ENCODE measurements at regions of chr12 and their contacts with region 1.

Region 1: DNA sequence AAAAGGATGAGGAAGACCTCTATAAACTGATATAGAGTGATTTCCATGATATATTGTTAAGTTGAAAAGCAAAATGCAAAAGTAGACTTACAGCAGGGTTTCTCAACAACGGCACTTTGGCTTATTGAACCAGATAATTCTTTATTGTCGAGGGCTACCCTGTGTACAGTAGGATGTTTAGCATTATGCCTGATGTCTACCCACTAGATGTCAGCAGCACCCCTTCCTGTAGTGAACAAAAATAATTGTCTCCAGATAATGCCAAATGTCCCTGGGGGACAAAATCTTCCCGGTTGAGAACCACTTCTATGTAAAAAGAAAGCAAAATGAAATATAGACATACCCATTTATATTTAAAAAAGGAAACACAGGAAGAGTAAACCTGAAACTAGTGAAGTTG is 32.4 kb downstream of the ABCD2 start:
- DNase-seq: no peak
- ATAC-seq: peak in 2 of 4 donors; percentile 54 to 60
- H3K4me3 ChIP-seq: no peak overlapping the region
- H3K27ac ChIP-seq: no peak overlapping the region
- H3K4me1 ChIP-seq: no peaks in the 10 kb centered on the region
- H3K27me3 ChIP-seq: no peaks in the 10 kb centered on the region
- CTCF ChIP-seq: no peak

Region 2: DNA sequence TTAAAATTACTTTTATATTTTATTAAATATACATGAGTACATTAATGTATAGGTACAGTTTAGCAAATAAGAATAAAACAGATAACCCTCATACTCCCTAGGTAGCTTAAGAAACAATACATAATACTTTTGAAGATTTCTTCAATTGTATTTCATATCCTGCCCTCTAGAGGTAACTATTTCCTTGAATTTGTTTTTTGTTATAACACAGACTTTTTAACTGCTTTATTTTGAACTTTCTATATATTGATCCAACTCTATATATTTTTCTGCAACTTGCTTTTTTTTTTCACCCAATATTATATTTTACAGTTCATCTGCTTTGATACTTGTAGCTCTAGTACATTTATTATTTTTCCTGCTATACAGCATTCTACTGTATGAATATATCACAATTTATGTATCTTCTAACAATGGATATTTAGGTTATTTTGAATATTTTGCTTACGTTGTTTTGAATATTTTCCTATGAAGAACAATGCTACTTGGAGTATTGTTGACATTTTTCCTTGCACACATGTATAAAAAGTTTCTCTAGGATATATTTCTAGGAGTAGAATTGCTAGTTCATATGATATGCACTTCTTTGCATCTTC is 105.1 kb after region 1 on chr12:
- intact Hi-C with region 1: loop called in 1 of 2 experiments (anchors 10 kb)
- DNase-seq: no peak
- ATAC-seq: no peak
- H3K4me3 ChIP-seq: no peak overlapping the region
- H3K27ac ChIP-seq: no peak overlapping the region
- H3K4me1 ChIP-seq: no peaks in the 10 kb centered on the region
- H3K27me3 ChIP-seq: no peaks in the 10 kb centered on the region
- CTCF ChIP-seq: peak; percentile 39

Measured in psoas muscle (tissue), 8 donors.